ENCODE measurements at regions of chr3 and their contacts with region 1.

Region 1: DNA sequence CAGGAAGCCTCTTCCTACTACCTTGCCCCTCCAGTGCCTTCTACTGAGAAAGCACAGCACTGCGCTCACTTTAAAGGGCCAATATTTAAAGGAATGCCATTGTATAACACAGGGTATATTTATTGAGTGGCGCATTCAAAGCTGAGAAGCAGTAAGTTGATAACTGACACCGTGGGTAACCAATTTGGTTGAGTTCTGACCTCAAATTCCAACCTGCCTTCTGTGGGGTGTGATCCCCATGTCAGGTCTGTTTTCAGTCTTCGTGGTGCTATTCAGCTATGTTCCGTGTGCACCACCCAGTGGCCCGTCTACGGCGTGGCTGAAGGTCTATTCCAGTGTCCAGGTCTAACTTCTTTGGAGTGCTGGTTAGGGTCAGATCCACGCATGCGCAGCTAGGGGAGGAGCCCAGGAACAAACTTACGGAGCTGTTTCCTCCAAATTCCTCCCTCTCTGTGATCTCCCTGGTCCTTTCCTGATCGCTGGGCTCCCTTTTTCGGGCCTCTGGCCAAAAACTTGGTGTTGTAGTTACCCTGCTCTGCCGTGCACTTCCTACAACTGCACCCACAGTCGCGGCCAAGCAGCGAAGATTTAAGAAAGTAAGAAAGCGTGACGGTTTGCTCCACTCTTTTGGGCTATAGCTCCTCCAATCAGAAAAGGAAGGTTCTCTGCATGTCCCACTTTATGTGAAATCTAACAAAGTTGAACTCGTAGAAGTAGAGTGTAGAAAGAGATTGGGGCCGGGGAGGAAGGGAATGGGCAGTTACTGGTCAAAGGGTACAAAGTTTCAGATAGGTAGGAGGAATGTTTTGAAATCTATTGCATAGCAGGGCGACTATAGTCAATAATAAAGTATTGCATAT is 7.7 kb downstream of the LRRC2 start:
- DNase-seq: peak; percentile 91
- ATAC-seq: peak; percentile 100
- H3K4me3 Mint-ChIP-seq: peak overlapping the region; percentile 76
- H3K27ac Mint-ChIP-seq: peak overlapping the region; percentile 63
- H3K4me1 Mint-ChIP-seq: peaks cover 23% of the 10 kb centered on the region
- H3K27me3 Mint-ChIP-seq: peaks cover 25% of the 10 kb centered on the region

Region 2: GRCh38 chr3:46496741-46497554 is 61.5 kb before region 1 on chr3:
- CTCF ChIA-PET with region 1: interaction called, 61 read pairs
- DNase-seq: peak; percentile 70
- ATAC-seq: peak; percentile 57
- H3K4me3 Mint-ChIP-seq: no peak overlapping the region
- H3K27ac Mint-ChIP-seq: no peak overlapping the region
- H3K4me1 Mint-ChIP-seq: peaks cover 4% of the 10 kb centered on the region
- H3K27me3 Mint-ChIP-seq: peaks cover 6% of the 10 kb centered on the region

Region 3: GRCh38 chr3:46517016-46517793 is 41.2 kb before region 1 on chr3:
- CTCF ChIA-PET with region 1: interaction called, 13 read pairs
- DNase-seq: no peak
- ATAC-seq: peak; percentile 51
- H3K4me3 Mint-ChIP-seq: no peak overlapping the region
- H3K27ac Mint-ChIP-seq: no peak overlapping the region
- H3K4me1 Mint-ChIP-seq: peaks cover 6% of the 10 kb centered on the region
- H3K27me3 Mint-ChIP-seq: peaks cover 6% of the 10 kb centered on the region

Region 4: DNA sequence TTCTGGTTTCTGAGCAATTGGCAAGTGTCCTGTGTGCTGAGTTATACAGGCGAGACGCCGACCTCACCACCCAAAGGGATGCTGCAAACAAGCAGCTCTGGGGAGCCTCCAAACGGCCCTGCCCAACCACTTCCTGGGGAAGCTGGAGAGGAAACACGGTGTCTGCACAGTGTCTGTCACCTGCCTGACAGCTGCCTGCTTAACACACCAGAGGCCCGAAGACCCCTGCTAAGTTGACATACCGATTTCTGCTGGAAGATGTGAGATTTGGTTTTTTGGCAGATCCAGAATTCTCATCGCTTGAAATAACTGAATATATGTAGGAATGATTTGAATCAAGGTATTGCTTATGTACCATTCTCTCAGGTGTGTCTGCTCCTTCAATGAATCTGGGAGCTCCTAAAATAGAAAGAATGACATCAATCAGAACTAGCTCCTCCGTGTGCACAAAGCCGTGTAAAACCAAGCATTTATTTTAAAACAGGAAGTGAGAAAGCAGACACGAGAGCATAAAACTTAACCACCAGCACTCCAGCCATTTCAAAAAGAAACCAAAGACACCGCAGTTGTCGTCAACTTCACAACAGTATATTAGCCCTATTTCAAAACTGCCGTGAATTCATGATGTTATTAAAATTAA is 19.5 kb before region 1 on chr3:
- CTCF ChIA-PET with region 1: interaction called, 39 read pairs
- DNase-seq: peak; percentile 96
- ATAC-seq: peak; percentile 92
- H3K4me3 Mint-ChIP-seq: peak overlapping the region; percentile 64
- H3K27ac Mint-ChIP-seq: peak overlapping the region; percentile 92
- H3K4me1 Mint-ChIP-seq: peaks cover 61% of the 10 kb centered on the region
- H3K27me3 Mint-ChIP-seq: peaks cover 16% of the 10 kb centered on the region

Region 5: DNA sequence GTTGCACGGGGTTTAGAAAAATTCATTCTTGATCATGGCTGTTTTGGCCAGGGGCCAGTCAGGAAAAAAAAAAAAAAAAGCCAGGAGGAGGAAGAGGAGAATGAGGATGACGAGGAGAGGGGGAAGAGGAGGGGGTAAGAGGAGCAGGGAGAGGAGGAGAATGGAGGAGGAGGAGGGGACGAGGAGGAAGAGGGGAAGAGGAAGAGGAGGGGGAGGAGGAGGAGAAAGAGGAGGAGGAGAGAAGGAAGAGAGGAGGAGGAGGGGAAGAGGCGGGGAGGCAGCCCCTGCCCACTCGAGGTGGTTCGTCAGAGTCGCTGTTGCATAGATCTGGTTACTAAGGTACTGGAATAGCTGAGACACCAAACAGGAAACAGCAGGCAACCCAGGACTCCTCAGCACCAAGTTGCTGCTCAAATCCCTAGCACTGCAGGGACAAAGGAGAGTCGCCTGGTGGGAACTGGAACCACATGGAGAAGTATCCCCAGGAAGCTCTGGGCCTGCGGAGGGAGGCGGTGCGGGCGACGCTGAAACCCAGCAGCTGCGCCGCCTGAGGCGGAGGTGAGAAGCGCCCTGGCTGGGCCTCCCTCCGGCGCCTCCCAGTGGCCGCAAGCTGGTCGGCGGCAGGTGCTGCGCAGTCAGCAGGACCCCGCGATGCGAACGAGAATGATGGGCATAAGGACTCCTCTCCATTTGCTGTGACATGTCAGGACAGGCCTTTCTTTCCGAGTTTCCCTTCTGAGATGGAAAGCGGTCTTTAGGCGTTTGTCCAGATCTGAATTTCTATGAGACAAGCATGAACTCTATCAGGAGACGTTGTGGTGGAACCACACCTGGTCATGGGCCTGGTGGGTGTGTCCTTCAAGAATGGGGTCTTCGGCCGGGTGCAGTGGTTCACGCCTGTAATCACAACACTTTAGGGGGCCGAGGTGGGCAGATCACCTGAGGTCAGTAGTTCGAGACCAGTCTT is 71.4 kb after region 1 on chr3:
- CTCF ChIA-PET with region 1: interaction called, 28 read pairs
- DNase-seq: peak; percentile 82
- ATAC-seq: peak; percentile 100
- H3K4me3 Mint-ChIP-seq: peak overlapping the region; percentile 37
- H3K27ac Mint-ChIP-seq: no peak overlapping the region
- H3K4me1 Mint-ChIP-seq: peaks cover 11% of the 10 kb centered on the region
- H3K27me3 Mint-ChIP-seq: peaks cover 10% of the 10 kb centered on the region

Measured in activated CD8-positive, alpha-beta memory T cell treated with anti-CD3 and anti-CD28 coated beads, Interleukin-2, amount 10 ng/mL, durations not matched to agents 7 days and 5 days (primary cell).